HepG2 (cell line): ENCODE measurements at regions of chr6 and their contacts with region 1.

Region 1: GRCh38 chr6:32971581-32972352 is 3.4 kb downstream of the BRD2 start:
- DNase-seq: peak; percentile 98
- ATAC-seq: peak; percentile 43
- H3K4me3 ChIP-seq: peak overlapping the region; percentile 90 to 98 (median 95)
- H3K27ac ChIP-seq: peak overlapping the region; percentile 99
- H3K4me1 ChIP-seq: peaks cover 47% of the 10 kb centered on the region
- H3K27me3 ChIP-seq: peaks cover 0 to 4% of the 10 kb centered on the region in 2 experiments; a peak in 1 of 5 replicates
- CTCF ChIP-seq: 0 out of 2 replicates have a peak, but pooled peaks have one; percentile 17
- EP300 ChIP-seq: peak; percentile 17 to 45; a peak in 2 of 4 replicates
- POLR2A ChIP-seq: peak in 1 of 2 experiments; percentile 100; a peak in 2 of 4 replicates
- RAD21 ChIP-seq: peak; percentile 62

Region 2: GRCh38 chr6:32195652-32195901 is 776.2 kb before region 1 on chr6:
- CTCF ChIA-PET with region 1: no interaction called
- POLR2A ChIA-PET with region 1: interaction called, 28 read pairs
- in situ Hi-C with region 1: loop called (anchors 5 kb)
- intact Hi-C with region 1: no loop called
- DNase-seq: peak; percentile 99
- ATAC-seq: no peak
- H3K4me3 ChIP-seq: peak overlapping the region in 2 of 3 experiments; percentile 94 to 96; a peak in 4 of 6 replicates
- H3K27ac ChIP-seq: peak overlapping the region; percentile 98
- H3K4me1 ChIP-seq: peaks cover 67% of the 10 kb centered on the region
- H3K27me3 ChIP-seq: no peaks in the 10 kb centered on the region; a peak in 1 of 5 replicates
- CTCF ChIP-seq: peak; percentile 69
- EP300 ChIP-seq: peak; percentile 32 to 60; a peak in 1 of 4 replicates
- POLR2A ChIP-seq: no peak
- RAD21 ChIP-seq: peak; percentile 29; the same call in 1 of the 2 replicates

Region 3: DNA sequence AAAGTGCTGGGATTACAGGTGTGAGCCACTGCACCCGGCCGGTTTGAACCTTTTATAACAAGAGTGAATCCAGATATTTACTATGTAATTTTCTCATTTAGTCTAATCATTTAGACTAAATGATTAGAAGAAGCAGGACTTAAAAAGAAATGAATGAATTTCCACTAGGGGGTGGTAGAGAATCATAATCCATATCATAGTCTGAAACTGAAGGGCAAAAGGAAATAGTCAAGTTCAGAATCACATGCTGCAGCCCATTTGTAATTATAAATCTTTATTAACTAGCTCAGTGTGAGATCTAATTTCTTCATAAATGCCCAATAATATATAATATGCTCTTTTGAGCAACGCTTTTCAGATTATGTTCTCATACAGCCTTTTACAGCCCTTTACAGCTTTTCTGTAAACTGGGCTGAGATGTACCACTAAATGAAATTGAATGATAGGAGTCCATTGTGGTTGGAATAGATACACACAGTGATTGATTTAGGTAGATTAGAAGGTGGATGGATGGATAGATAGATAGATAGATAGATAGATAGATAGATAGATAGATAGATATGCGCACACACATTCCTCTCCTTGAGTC is 86.0 kb before region 1 on chr6:
- CTCF ChIA-PET with region 1: no interaction called
- POLR2A ChIA-PET with region 1: no interaction called
- in situ Hi-C with region 1: loop called (anchors 5 kb)
- intact Hi-C with region 1: loop called (anchors 5 kb)
- DNase-seq: peak; percentile 77
- ATAC-seq: peak; percentile 67
- H3K4me3 ChIP-seq: no peak overlapping the region
- H3K27ac ChIP-seq: no peak overlapping the region
- H3K4me1 ChIP-seq: no peaks in the 10 kb centered on the region
- H3K27me3 ChIP-seq: peaks cover 0 to 36% of the 10 kb centered on the region in 2 experiments; a peak in 2 of 5 replicates
- CTCF ChIP-seq: peak; percentile 68
- EP300 ChIP-seq: no peak
- POLR2A ChIP-seq: no peak
- RAD21 ChIP-seq: peak; percentile 67

Region 4: GRCh38 chr6:32952817-32953739 is 18.7 kb before region 1 on chr6 and contains the start of gene HLA-DMA:
- CTCF ChIA-PET with region 1: interaction called, 3 read pairs
- POLR2A ChIA-PET with region 1: interaction called, 202 read pairs
- in situ Hi-C with region 1: no loop called
- intact Hi-C with region 1: no loop called
- DNase-seq: peak; percentile 85
- ATAC-seq: peak; percentile 92
- H3K4me3 ChIP-seq: no peak within 1 kb of the TSS
- H3K27ac ChIP-seq: no peak within 1 kb of the TSS
- H3K4me1 ChIP-seq: peaks cover 12% of the 10 kb centered on the region
- H3K27me3 ChIP-seq: peaks cover 1 to 13% of the 10 kb centered on the region in 2 experiments; a peak in 2 of 5 replicates
- CTCF ChIP-seq: peak; percentile 82
- EP300 ChIP-seq: no peak
- POLR2A ChIP-seq: no peak
- RAD21 ChIP-seq: peak; percentile 62
- total RNA-seq, gene HLA-DMA: 0.71 and 1.3 TPM in 2 replicates

Region 5: DNA sequence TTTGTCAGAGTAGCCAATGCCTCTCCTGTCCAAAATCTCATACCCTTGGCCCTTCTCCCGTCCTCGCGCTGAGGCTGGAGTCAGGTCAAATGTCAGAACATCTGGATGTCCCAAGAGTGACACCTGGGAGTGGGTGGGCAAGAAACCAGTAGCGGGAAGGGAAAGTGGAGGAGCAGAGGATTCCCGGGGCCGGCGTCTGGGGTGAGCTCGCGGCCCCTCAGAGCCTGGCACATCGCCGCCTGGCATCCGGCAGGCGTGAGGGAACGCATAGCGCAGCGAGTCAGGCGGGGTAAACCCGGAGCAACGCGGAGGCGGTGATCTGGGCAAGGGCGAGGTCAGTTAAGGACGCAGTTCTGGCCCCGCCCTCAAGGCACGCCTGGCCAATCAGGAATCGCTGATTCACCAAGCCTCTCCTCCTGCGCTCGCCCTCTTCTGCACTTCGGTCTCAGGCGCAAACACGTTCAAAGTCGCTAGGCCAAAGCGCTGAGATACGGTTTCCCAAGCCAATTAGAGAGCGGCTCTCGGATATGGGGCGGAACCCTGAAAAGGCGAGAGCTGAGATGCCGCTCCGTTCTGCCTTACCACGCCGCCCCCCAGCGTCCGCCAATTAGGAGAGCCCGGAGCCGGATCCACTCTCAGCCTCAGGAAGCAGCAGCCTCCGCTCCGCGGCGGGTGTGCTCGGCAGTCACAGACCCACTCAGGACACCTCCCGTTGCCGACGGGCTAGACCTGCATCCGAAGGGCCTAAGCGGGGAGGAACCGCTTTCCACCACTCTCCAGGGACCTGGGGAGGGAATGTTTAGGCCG is 277.4 kb after region 1 on chr6:
- CTCF ChIA-PET with region 1: no interaction called
- POLR2A ChIA-PET with region 1: interaction called, 56 read pairs
- in situ Hi-C with region 1: no loop called
- intact Hi-C with region 1: no loop called
- DNase-seq: peak; percentile 99
- ATAC-seq: peak; percentile 93
- H3K4me3 ChIP-seq: peak overlapping the region; percentile 80 to 89 (median 86)
- H3K27ac ChIP-seq: peak overlapping the region; percentile 94
- H3K4me1 ChIP-seq: peaks cover 29% of the 10 kb centered on the region
- H3K27me3 ChIP-seq: no peaks in the 10 kb centered on the region; a peak in 1 of 5 replicates
- CTCF ChIP-seq: peak; percentile 74
- EP300 ChIP-seq: no peak
- POLR2A ChIP-seq: peak; percentile 90 to 91
- RAD21 ChIP-seq: peak; percentile 17; the same call in 1 of the 2 replicates